H1 (cell line): ENCODE measurements at regions of chr17 and their contacts with region 1.

Region 1: GRCh38 chr17:49361902-49362722 is at the start of gene ZNF652:
- DNase-seq: peak; percentile 93 to 97
- H3K4me3 ChIP-seq: peak within 1 kb of the TSS; percentile 86 to 98 (median 89)
- H3K27ac ChIP-seq: peak within 1 kb of the TSS; percentile 82; the same call in 1 of the 2 replicates
- H3K4me1 ChIP-seq: peaks cover 5 to 14% (median 7%) of the 10 kb centered on the region in 4 experiments; a peak in 6 of 7 replicates
- H3K27me3 ChIP-seq: no peaks in the 10 kb centered on the region
- CTCF ChIP-seq: no peak
- EP300 ChIP-seq: no peak
- POLR2A ChIP-seq: peak in 1 of 2 experiments; percentile 11; a peak in 1 of 3 replicates
- RAD21 ChIP-seq: no peak
- total RNA-seq, gene ZNF652: 36.5 and 39.6 TPM in 2 replicates

Region 2: DNA sequence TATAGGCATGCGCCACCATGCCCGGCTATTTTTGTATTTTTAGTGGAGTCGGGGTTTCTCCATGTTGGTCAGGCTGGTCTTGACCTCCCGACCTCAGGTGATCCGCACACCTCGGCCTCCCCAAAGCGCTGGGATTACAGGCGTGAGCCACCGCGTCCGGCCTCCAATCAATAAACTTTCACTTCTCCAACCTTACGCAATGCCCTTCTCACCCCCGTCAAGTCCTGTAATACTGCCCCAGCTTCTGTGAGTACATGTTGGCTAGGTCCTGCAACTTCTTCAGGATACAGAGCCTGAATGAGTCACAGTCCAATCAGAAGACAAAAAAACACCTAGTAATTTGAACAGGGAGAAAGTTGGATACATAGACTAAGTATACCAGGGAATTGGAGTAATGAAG is 84.5 kb before region 1 on chr17:
- CTCF ChIA-PET with region 1: no interaction called
- POLR2A ChIA-PET with region 1: no interaction called
- DNase-seq: no peak
- H3K4me3 ChIP-seq: no peak overlapping the region
- H3K27ac ChIP-seq: no peak overlapping the region
- H3K4me1 ChIP-seq: peaks cover 0 to 3% (median 2%) of the 10 kb centered on the region in 4 experiments; a peak in 4 of 7 replicates
- H3K27me3 ChIP-seq: no peaks in the 10 kb centered on the region
- CTCF ChIP-seq: no peak
- EP300 ChIP-seq: no peak
- POLR2A ChIP-seq: no peak
- RAD21 ChIP-seq: no peak

Region 3: GRCh38 chr17:49381063-49381462 is 19.0 kb after region 1 on chr17:
- CTCF ChIA-PET with region 1: interaction called, 65 read pairs
- POLR2A ChIA-PET with region 1: interaction called, 4 read pairs
- DNase-seq: no peak
- H3K4me3 ChIP-seq: no peak overlapping the region
- H3K27ac ChIP-seq: no peak overlapping the region
- H3K4me1 ChIP-seq: peaks cover 4 to 8% (median 6%) of the 10 kb centered on the region in 4 experiments; a peak in 4 of 7 replicates
- H3K27me3 ChIP-seq: no peaks in the 10 kb centered on the region
- CTCF ChIP-seq: no peak
- EP300 ChIP-seq: no peak
- POLR2A ChIP-seq: no peak
- RAD21 ChIP-seq: no peak